Right cardiac atrium (tissue), 5 donors: ENCODE measurements at regions of chr15 and their contacts with region 1.

Region 1: GRCh38 chr15:29242456-29243242 is 27.0 kb downstream of the NSMCE3 start:
- DNase-seq: no peak
- ATAC-seq: no peak
- H3K4me3 ChIP-seq: no peak overlapping the region
- H3K27ac ChIP-seq: no peak overlapping the region
- H3K4me1 ChIP-seq: no peaks in the 10 kb centered on the region
- H3K27me3 ChIP-seq: no peaks in the 10 kb centered on the region

Region 2: GRCh38 chr15:29294732-29295325 is 52.2 kb after region 1 on chr15:
- intact Hi-C with region 1: loop called in 1 of 4 experiments (anchors 5 kb)
- DNase-seq: no peak
- ATAC-seq: no peak
- H3K4me3 ChIP-seq: no peak overlapping the region
- H3K27ac ChIP-seq: no peak overlapping the region
- H3K4me1 ChIP-seq: no peaks in the 10 kb centered on the region
- H3K27me3 ChIP-seq: no peaks in the 10 kb centered on the region